ENCODE measurements at regions of chr3 and their contacts with region 1.

Region 1: GRCh38 chr3:197256836-197257444 is 41.5 kb downstream of the DLG1 start:
- DNase-seq: no peak
- H3K4me3 ChIP-seq: no peak overlapping the region
- H3K27ac ChIP-seq: no peak overlapping the region
- H3K4me1 ChIP-seq: peaks cover 8% of the 10 kb centered on the region
- H3K27me3 ChIP-seq: no peaks in the 10 kb centered on the region
- CTCF ChIP-seq: peak; percentile 35 to 65 (median 45)
- POLR2A ChIP-seq: no peak

Region 2: GRCh38 chr3:197511130-197511529 is 254.2 kb after region 1 on chr3:
- intact Hi-C with region 1: loop called (anchors 5 kb)
- DNase-seq: no peak
- H3K4me3 ChIP-seq: no peak overlapping the region
- H3K27ac ChIP-seq: no peak overlapping the region
- H3K4me1 ChIP-seq: peaks cover 17% of the 10 kb centered on the region
- H3K27me3 ChIP-seq: no peaks in the 10 kb centered on the region
- CTCF ChIP-seq: no peak
- POLR2A ChIP-seq: no peak

Region 3: GRCh38 chr3:197730200-197730599 is 473.3 kb after region 1 on chr3:
- intact Hi-C with region 1: no loop called
- DNase-seq: no peak
- H3K4me3 ChIP-seq: no peak overlapping the region
- H3K27ac ChIP-seq: no peak overlapping the region
- H3K4me1 ChIP-seq: peaks cover 9% of the 10 kb centered on the region
- H3K27me3 ChIP-seq: no peaks in the 10 kb centered on the region
- CTCF ChIP-seq: no peak
- POLR2A ChIP-seq: no peak

Measured in vagina (tissue), 2 donors.